Esophagus muscularis mucosa (tissue), 4 donors: ENCODE measurements at regions of chr1 and their contacts with region 1.

Region 1: GRCh38 chr1:205523891-205524793 is 19.7 kb downstream of the CDK18 start:
- DNase-seq: no peak
- H3K4me3 ChIP-seq: no peak overlapping the region
- H3K27ac ChIP-seq: no peak overlapping the region
- H3K4me1 ChIP-seq: peaks cover 16 to 43% (median 23%) of the 10 kb centered on the region in 4 donors
- H3K27me3 ChIP-seq: peaks cover 0 to 16% (median 0%) of the 10 kb centered on the region in 4 donors
- CTCF ChIP-seq: peak; percentile 69 to 79 (median 73)
- EP300 ChIP-seq: no peak
- POLR2A ChIP-seq: no peak

Region 2: GRCh38 chr1:205354259-205354904 is 169.8 kb before region 1 on chr1:
- intact Hi-C with region 1: loop called (anchors 5 kb)
- DNase-seq: no peak
- H3K4me3 ChIP-seq: no peak overlapping the region
- H3K27ac ChIP-seq: no peak overlapping the region
- H3K4me1 ChIP-seq: peaks cover 0 to 13% (median 11%) of the 10 kb centered on the region in 4 donors
- H3K27me3 ChIP-seq: peaks cover 0 to 31% (median 0%) of the 10 kb centered on the region in 4 donors
- CTCF ChIP-seq: peak; percentile 82 to 90 (median 83)
- EP300 ChIP-seq: no peak
- POLR2A ChIP-seq: no peak

Region 3: DNA sequence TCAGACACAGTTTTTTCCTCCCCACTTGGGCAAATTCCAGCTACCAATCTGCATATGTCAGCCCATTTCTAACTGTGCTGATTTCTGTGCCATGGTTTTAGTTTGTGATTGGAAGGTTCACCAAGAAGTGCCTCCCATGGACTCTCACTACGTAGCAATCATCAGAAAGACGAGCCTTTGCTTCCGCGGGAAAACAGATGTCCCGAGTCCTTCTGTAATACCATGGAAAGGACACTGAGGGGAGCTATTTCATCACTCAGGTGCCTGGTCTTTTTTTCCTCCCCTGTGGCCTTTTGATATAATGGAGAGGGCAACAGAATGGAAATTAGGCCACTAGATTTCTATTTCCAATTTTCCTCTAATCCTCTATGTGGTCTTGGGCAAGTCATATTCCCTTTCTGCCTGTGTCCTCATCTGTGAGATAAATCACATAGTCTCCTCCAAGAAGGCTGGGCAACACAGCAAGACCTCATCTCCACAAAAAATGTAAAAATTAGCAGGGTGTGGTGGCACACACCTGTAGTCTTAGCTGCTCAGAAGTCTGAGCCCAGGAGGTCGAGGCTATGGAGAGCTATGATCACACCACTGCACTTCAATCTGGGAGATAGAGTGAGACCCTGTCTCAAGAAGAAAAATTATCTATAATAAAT is 127.0 kb before region 1 on chr1:
- intact Hi-C with region 1: loop called (anchors 5 kb)
- DNase-seq: peak; percentile 83
- H3K4me3 ChIP-seq: no peak overlapping the region
- H3K27ac ChIP-seq: no peak overlapping the region
- H3K4me1 ChIP-seq: peaks cover 0 to 5% (median 0%) of the 10 kb centered on the region in 4 donors
- H3K27me3 ChIP-seq: peaks cover 0 to 11% (median 0%) of the 10 kb centered on the region in 4 donors
- CTCF ChIP-seq: peak; percentile 52 to 64 (median 62)
- EP300 ChIP-seq: no peak
- POLR2A ChIP-seq: no peak

Region 4: DNA sequence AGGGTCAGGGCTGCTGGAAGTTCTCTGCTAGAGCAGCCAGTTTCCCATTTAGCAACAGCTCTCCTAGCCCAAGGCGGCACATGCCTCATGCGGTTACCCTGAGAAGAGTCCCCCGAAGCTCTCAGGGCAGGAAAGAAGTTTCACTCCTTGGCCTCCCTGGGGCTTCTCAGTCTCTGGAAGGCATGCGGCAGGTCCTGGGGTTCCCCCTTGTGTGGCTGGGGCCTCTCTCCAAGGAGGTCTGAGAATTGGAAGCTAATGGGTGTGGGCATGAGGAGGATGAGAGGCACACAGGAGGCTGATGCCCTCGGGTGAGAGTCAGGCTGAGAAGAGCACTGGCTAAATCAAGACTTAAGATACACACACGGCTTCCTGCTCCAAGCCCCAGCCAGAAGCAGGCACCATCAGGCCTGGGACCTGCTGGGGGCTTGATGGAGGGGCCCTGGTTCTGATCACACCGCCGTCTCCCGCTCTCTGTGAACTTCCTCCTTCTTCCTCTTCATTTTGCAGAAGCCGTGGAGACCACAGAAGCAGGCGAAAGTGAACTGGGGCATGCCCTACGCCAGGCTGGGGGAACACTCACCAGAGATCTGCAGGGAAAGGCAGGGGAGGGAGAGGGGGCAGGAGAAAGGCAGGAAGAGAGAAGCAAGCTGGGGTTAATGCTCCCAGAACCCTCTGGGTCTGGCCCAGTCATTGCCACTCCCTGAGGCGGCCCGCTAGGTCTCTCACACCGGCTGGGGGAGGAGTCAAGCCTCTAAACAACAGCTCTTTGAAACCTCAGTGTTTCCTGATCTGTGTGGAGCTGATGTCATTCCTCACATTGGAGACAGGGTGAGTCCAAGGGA is 83.4 kb before region 1 on chr1:
- intact Hi-C with region 1: no loop called
- DNase-seq: no peak
- H3K4me3 ChIP-seq: peak overlapping the region in 3 of 4 donors; percentile 6 to 25 (median 21)
- H3K27ac ChIP-seq: peak overlapping the region; percentile 19 to 54 (median 38)
- H3K4me1 ChIP-seq: peaks cover 40 to 74% (median 59%) of the 10 kb centered on the region in 4 donors
- H3K27me3 ChIP-seq: peaks cover 0 to 15% (median 3%) of the 10 kb centered on the region in 4 donors
- CTCF ChIP-seq: no peak
- EP300 ChIP-seq: no peak
- POLR2A ChIP-seq: no peak

Region 5: GRCh38 chr1:205485338-205486228 is 38.6 kb before region 1 on chr1:
- intact Hi-C with region 1: loop called (anchors 2 kb)
- DNase-seq: no peak
- H3K4me3 ChIP-seq: no peak overlapping the region
- H3K27ac ChIP-seq: no peak overlapping the region
- H3K4me1 ChIP-seq: peaks cover 0 to 2% (median 0%) of the 10 kb centered on the region in 4 donors
- H3K27me3 ChIP-seq: peaks cover 0 to 64% (median 0%) of the 10 kb centered on the region in 4 donors
- CTCF ChIP-seq: peak; percentile 91 to 99 (median 92)
- EP300 ChIP-seq: no peak
- POLR2A ChIP-seq: no peak

Region 6: GRCh38 chr1:205493241-205494085 is 30.7 kb before region 1 on chr1:
- intact Hi-C with region 1: loop called (anchors 2 kb)
- DNase-seq: no peak
- H3K4me3 ChIP-seq: no peak overlapping the region
- H3K27ac ChIP-seq: peak overlapping the region in 2 of 4 donors; percentile 8 to 10
- H3K4me1 ChIP-seq: peaks cover 14 to 26% (median 19%) of the 10 kb centered on the region in 4 donors
- H3K27me3 ChIP-seq: peaks cover 0 to 31% (median 0%) of the 10 kb centered on the region in 4 donors
- CTCF ChIP-seq: no peak
- EP300 ChIP-seq: no peak
- POLR2A ChIP-seq: no peak